Caco-2 (cell line): ENCODE measurements at regions of chr7 and their contacts with region 1.

Region 1: DNA sequence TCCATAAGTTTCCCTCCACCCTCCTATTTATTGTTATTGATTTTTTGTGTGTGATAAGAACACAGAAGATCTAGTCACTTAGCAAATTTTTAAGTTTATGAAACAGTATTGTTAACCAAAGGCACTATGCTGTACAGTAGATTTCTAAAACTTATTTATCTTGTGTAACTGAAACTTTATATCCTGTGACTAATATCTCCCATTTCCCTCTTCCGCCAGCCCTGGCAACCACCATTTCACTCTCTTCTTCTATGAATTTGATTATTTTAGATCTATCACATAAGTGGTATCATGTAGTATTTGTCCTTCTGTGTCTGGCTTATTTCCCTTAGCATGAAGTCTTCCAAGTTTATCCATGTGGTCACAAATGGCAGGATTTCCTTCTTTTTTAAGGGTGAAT is 144.3 kb upstream of the INHBA start:
- DNase-seq: no peak
- H3K4me3 ChIP-seq: no peak overlapping the region
- H3K4me3 Mint-ChIP-seq: no peak overlapping the region
- H3K27ac Mint-ChIP-seq: no peak overlapping the region
- H3K4me1 ChIP-seq: no peaks in the 10 kb centered on the region
- H3K4me1 Mint-ChIP-seq: no peaks in the 10 kb centered on the region
- H3K27me3 ChIP-seq: no peaks in the 10 kb centered on the region
- H3K27me3 Mint-ChIP-seq: peaks cover 6% of the 10 kb centered on the region
- CTCF ChIP-seq: no peak

Region 2: DNA sequence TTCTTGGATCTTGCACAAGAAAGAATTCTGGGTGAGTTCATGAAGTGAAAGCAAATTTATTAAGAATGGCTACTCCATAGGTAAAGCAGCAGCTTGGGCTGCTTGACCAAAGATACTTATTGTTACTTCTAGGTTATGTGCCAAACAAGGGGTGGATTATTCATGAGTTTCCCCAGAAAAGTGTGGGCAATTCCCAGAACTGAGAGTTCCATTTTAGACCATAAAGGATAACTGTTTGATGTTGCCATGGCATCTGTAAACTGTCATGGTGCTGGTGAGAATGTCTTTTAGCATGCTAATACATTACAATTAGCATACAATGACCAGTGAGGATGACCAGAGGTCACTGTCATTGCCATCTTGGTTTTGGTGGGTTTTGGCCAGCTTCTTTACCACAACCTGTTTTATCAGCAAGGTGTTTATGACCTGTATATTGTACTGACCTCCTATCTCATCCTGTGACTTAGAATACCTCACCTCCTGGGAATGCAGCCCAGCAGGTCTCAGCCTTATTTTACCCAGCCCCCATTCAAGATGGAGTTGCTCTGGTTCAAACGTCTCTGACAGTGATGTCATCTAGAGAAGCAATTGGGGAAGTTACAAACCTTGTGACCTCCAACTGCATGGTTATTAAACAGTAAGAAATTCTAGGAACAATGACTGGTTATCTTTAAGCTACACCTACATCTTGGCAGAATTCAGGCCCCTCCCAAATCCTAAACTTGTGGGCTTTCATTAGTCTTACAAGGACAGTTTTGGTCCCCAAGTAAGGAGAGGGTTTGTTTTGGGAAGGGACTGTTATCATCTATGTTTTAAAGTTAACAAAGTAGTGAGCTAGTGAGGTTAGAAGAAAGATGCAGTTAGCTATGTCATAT is 96.2 kb before region 1 on chr7:
- CTCF ChIA-PET with region 1: no interaction called
- POLR2A ChIA-PET with region 1: no interaction called
- intact Hi-C with region 1: loop called (anchors 5 kb)
- DNase-seq: peak; percentile 32 to 46
- H3K4me3 ChIP-seq: no peak overlapping the region
- H3K4me3 Mint-ChIP-seq: no peak overlapping the region
- H3K27ac Mint-ChIP-seq: peak overlapping the region; percentile 54
- H3K4me1 ChIP-seq: peaks cover 47% of the 10 kb centered on the region
- H3K4me1 Mint-ChIP-seq: peaks cover 25% of the 10 kb centered on the region
- H3K27me3 ChIP-seq: no peaks in the 10 kb centered on the region
- H3K27me3 Mint-ChIP-seq: no peaks in the 10 kb centered on the region
- CTCF ChIP-seq: no peak

Region 3: DNA sequence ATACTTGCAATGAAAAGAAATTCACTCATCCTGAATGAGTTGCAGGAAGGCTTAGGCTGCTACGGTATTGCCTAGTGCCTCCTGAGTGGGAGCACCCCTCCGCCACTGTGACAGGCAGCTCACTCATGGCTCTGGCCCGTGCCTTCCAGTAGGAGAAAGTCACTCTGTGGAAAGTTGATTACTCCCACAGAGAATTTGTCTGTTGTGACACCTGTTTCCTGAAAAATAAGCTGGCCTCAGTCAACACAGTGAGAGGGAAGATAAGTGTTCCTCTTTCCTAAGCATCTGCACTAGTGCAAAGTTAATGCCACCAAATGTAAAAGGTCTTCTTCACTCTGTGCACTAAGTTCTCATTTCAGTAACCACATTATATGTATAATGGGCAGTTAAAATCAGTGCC is 14.5 kb after region 1 on chr7:
- CTCF ChIA-PET with region 1: no interaction called
- POLR2A ChIA-PET with region 1: no interaction called
- intact Hi-C with region 1: loop called (anchors 1 kb)
- DNase-seq: no peak
- H3K4me3 ChIP-seq: no peak overlapping the region
- H3K4me3 Mint-ChIP-seq: no peak overlapping the region
- H3K27ac Mint-ChIP-seq: no peak overlapping the region
- H3K4me1 ChIP-seq: no peaks in the 10 kb centered on the region
- H3K4me1 Mint-ChIP-seq: no peaks in the 10 kb centered on the region
- H3K27me3 ChIP-seq: no peaks in the 10 kb centered on the region
- H3K27me3 Mint-ChIP-seq: peaks cover 5% of the 10 kb centered on the region
- CTCF ChIP-seq: no peak